ENCODE measurements at regions of chr20 and their contacts with region 1.

Region 1: DNA sequence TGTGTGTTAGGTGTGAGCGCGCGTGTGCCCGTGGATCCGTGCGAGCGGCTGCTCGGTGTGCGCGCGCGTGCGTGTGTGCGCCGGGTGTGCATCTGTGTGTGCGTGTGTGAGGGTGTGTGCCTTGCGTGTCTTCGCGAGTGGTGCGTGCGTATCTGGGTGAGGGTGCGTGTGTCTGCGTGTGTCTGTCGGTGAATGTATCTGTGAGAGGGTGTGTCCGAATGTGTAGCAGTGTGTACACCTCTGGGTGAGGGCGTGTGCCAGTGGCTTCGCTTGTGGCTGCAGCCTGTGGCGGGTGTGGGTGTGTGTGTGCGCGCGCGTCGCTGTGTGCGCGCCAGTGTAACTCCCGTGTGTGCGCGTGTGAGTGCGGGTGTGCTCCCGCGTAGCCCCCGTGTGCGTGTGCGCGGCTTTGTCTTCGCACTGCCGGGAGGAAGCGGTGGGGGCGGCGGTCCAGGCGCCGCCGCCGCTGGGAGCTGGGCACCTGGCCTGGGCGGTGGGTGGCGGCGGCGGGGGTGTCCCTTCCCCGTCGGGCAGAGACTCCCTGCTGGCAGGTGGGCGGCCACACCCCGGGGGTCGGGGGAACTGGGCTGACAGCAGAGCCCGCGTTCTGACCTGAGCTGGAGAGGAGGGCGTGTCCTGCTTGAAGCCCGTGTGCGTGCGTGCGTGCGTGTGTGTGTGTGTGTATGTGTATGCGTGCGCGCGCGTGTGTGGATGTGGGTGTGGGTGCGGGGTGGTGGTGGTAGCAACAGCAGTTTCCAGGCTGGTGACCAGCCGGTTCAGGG is 61.3 kb upstream of the EPB41L1 start:
- DNase-seq: no peak
- H3K27ac ChIP-seq: peak overlapping the region; percentile 84
- CTCF ChIP-seq: no peak

Region 2: DNA sequence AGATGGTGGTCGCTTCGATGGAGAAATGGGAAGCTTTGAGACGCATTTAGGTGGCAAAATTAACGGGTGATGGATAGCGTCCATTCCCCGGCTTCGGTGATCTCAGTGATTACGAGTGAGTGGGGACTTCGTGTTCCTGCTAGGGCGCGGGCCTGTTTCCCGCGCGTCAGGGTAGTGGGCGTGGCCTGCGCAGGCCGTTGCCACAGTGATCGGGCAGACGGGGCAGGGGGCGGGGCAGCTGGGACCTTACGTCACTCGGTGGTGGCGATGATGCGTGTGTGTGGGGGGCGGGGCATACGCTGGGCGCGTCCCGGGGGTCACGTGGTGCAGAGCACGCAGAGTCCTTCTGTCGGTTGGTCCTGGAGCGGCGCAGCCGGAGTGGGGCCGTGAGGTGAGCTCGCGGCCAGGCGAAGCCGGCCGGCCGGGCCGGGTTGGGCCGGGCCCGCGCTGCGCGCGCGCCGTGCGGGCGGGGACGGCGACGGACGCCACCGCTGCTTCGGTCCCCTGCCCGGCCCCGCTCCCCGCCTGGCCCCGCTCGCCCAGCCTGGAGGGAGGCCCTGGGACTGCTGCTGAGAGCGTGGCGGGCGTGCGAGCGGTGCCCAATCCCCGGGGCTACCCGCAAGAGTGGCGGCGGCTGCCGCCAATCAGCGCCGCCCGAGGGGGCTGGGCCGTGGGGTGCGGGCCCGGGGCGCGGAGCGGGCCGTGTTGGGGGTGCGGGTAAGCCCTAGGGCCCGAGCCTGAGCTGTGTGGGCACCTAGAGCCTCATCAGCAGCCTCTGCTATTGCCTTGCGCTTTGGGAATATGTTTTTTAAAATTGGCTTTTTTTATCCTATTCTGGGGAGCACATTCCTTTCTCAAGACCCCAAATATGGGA is 321.3 kb before region 1 on chr20 and contains the start of gene PHF20:
- CTCF ChIA-PET with region 1: no interaction called
- POLR2A ChIA-PET with region 1: no interaction called
- DNase-seq: peak; percentile 100
- H3K27ac ChIP-seq: peak within 1 kb of the TSS; percentile 86
- CTCF ChIP-seq: no peak

Region 3: GRCh38 chr20:36035745-36036144 is 57.5 kb before region 1 on chr20:
- CTCF ChIA-PET with region 1: no interaction called
- POLR2A ChIA-PET with region 1: no interaction called
- DNase-seq: peak; percentile 97
- H3K27ac ChIP-seq: peak overlapping the region; percentile 46; the same call in 1 of the 2 replicates
- CTCF ChIP-seq: no peak

Region 4: DNA sequence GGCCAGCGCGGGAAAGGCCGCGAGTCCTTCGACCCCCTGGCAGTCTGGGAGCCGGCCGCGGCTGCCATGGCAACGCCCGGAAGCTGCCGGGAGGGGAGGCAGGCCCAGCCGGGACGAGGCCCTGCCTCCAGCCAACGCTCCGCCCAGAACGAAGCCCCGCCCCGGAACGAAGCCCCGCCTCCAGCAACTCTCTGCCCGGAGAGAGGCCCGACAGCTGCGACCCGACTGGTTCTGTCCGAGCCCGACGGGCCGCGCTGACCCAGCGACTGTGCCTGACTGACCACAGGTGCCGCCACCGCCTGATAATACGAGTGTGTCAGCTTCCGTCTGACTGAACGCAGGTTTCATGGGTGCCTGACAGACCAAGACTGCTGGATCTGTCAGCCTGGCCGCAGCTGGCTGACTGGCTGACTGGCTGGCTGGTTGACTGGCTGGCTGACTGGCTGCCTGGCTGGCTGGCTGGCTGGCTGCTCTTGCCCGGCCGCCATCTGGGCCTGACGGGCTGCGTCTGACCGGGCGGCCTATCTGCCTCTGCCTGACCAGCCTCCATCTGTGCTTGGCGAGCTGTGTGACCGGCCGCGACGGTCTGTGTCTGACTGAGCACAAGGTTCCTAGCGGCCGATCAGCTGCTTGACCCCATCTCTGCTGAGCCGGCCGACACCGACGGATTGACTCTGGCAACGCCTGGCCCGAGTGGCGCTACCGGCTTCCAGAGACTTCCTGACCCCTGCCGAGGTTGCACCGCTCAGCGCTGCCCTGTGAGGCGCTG is 28.4 kb before region 1 on chr20:
- CTCF ChIA-PET with region 1: interaction called, 10 read pairs
- POLR2A ChIA-PET with region 1: interaction called, 3 read pairs
- DNase-seq: peak; percentile 98
- H3K27ac ChIP-seq: peak overlapping the region; percentile 75
- CTCF ChIP-seq: no peak